Activated CD8-positive, alpha-beta T cell treated with anti-CD3 and anti-CD28 coated beads for 36 hours (primary cell): ENCODE measurements at regions of chr6 and their contacts with region 1.

Region 1: GRCh38 chr6:36759148-36759759 is 61.6 kb downstream of the RAB44 start:
- DNase-seq: peak; percentile 82
- ATAC-seq: peak; percentile 45
- H3K4me3 Mint-ChIP-seq: no peak overlapping the region
- H3K27ac Mint-ChIP-seq: no peak overlapping the region
- H3K4me1 Mint-ChIP-seq: peaks cover 38% of the 10 kb centered on the region
- H3K27me3 Mint-ChIP-seq: no peaks in the 10 kb centered on the region
- CTCF ChIP-seq: peak; percentile 92

Region 2: DNA sequence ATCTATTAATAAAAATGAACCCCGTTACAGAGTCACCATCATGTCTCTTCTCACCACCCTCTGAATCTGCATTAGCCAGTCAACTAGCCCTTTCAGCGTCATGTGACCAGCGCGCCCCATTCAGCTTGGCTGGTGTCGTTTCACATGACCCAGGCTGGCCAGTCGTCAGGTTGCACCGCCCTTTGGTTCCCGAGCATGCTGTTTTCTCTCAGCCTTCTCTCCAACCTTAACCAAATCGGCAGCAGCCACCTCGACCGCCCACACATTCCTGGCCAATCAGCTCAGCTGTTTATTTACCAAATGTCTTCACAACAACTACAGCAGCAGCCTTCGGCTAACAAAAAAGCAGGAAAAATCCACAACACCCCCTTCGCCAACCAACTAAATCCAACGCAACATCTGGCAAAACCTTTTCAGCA is 159.5 kb before region 1 on chr6:
- CTCF ChIA-PET with region 1: interaction called, 16 read pairs
- POLR2A ChIA-PET with region 1: interaction called, 3 read pairs
- intact Hi-C with region 1: no loop called
- DNase-seq: peak; percentile 91
- ATAC-seq: peak; percentile 88
- H3K4me3 Mint-ChIP-seq: peak overlapping the region; percentile 86
- H3K27ac Mint-ChIP-seq: peak overlapping the region; percentile 85
- H3K4me1 Mint-ChIP-seq: peaks cover 61% of the 10 kb centered on the region
- H3K27me3 Mint-ChIP-seq: no peaks in the 10 kb centered on the region
- CTCF ChIP-seq: no peak

Region 3: DNA sequence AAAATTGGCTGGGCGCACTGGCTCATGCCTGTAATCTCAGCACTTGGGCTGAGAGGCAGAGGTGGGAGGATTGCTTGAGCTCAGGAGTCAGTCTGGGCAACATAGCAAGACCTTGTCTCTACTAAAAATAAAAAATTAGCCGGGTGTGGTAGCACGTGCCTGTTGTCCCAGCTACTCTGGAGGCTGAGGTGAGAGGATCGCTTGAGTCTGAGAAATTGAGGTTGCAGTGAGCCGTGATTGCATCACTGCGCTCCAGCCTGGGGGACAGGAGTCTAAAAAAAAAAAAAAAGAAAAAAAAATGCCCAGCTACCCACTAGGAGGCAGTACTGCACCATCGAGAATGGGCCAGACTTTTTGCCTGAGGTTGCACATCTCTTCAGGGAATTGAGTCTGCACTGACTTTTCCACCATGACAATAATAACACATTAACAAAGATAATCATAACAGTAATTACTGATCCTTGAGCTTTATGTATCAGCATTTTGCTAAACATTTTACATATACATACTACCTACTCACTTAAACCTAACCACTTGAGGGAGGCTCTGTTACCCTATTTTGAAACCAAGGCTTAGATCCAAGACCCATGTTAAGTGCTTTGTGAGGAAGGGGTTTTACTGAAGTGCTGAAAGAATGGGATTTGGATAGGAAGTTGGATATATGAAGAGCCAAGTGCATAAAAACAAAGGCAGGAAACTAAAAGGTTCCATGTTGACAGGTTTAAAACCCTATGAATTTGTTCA is 144.1 kb before region 1 on chr6:
- CTCF ChIA-PET with region 1: interaction called, 56 read pairs
- POLR2A ChIA-PET with region 1: interaction called, 14 read pairs
- intact Hi-C with region 1: loop called (anchors 1 kb)
- DNase-seq: peak; percentile 57
- ATAC-seq: peak; percentile 71
- H3K4me3 Mint-ChIP-seq: no peak overlapping the region
- H3K27ac Mint-ChIP-seq: peak overlapping the region; percentile 59
- H3K4me1 Mint-ChIP-seq: peaks cover 13% of the 10 kb centered on the region
- H3K27me3 Mint-ChIP-seq: no peaks in the 10 kb centered on the region
- CTCF ChIP-seq: peak; percentile 85

Region 4: DNA sequence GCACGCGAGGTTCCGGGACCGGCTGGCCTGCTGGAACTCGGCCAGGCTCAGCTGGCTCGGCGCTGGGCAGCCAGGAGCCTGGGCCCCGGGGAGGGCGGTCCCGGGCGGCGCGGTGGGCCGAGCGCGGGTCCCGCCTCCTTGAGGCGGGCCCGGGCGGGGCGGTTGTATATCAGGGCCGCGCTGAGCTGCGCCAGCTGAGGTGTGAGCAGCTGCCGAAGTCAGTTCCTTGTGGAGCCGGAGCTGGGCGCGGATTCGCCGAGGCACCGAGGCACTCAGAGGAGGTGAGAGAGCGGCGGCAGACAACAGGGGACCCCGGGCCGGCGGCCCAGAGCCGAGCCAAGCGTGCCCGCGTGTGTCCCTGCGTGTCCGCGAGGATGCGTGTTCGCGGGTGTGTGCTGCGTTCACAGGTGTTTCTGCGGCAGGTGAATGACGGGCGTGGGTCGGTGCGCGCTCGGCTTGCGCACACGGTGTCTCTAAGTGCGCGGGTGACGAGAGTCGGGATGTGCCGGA is 80.7 kb before region 1 on chr6 and contains the start of gene CDKN1A:
- CTCF ChIA-PET with region 1: interaction called, 36 read pairs
- POLR2A ChIA-PET with region 1: interaction called, 5 read pairs
- intact Hi-C with region 1: loop called (anchors 5 kb)
- DNase-seq: peak; percentile 84
- ATAC-seq: peak; percentile 62
- H3K4me3 Mint-ChIP-seq: peak within 1 kb of the TSS; percentile 91
- H3K27ac Mint-ChIP-seq: peak within 1 kb of the TSS; percentile 72
- H3K4me1 Mint-ChIP-seq: peaks cover 50% of the 10 kb centered on the region
- H3K27me3 Mint-ChIP-seq: peaks cover 4% of the 10 kb centered on the region
- CTCF ChIP-seq: no peak
- total RNA-seq, gene CDKN1A: 42.3 to 47.4 TPM

Region 5: DNA sequence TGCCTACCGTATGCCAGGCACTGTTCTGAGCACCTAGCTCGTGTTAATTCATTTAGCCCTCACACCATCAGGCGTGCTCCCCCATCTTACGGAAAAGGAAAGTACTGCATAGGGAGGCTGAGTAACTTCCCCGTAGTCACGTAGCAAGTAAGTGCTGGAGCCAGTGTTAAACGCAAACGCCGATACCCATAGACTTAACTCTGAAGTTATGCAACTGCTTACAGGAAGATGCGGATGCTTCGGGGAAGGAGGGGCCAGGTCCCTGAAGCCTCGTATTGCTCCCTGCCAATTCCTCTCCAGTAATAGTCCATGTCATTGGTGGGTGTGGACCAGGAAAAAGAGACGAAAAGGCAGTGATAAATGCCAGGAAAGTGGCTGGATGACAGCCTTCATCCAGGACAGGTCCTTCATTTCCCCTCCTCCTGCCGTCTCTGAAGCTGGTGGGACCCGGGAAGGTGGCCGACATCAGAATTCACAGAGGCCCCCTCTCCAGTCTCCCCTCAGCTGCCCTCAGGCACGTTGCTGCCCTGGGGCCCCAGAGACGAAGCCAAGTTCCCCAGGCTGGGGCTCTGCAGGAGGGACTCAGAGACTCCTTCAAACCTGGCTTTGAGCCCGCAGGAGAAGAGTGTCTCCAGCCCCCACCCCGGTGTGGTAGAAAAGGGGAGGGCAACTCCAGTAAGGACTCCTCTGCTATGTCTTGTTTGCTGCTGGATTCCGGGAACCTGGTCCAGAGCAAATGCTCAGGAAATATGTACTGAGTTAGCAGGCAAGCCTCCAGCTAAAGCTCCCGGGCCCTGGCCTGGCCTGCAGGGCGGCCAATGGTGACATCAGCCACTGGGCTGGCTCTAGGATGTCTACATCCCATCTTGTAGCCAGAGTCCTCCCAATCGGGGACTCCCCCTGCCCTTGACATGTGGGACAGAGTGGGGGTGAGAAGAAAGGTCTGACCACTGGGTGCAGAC is 23.9 kb before region 1 on chr6:
- CTCF ChIA-PET with region 1: interaction called, 10 read pairs
- POLR2A ChIA-PET with region 1: no interaction called
- intact Hi-C with region 1: no loop called
- DNase-seq: peak; percentile 63
- ATAC-seq: peak; percentile 94
- H3K4me3 Mint-ChIP-seq: peak overlapping the region; percentile 55
- H3K27ac Mint-ChIP-seq: peak overlapping the region; percentile 84
- H3K4me1 Mint-ChIP-seq: peaks cover 11% of the 10 kb centered on the region
- H3K27me3 Mint-ChIP-seq: peaks cover 3% of the 10 kb centered on the region
- CTCF ChIP-seq: no peak

Region 6: GRCh38 chr6:36874443-36875249 is 115.4 kb after region 1 on chr6 and contains the start of gene PPIL1:
- CTCF ChIA-PET with region 1: interaction called, 13 read pairs
- POLR2A ChIA-PET with region 1: no interaction called
- intact Hi-C with region 1: no loop called
- DNase-seq: peak; percentile 88
- ATAC-seq: peak; percentile 91
- H3K4me3 Mint-ChIP-seq: peak within 1 kb of the TSS; percentile 99
- H3K27ac Mint-ChIP-seq: peak within 1 kb of the TSS; percentile 100
- H3K4me1 Mint-ChIP-seq: peaks cover 42% of the 10 kb centered on the region
- H3K27me3 Mint-ChIP-seq: peaks cover 5% of the 10 kb centered on the region
- CTCF ChIP-seq: no peak
- total RNA-seq, gene PPIL1: 34.5 to 35.6 TPM

Region 7: DNA sequence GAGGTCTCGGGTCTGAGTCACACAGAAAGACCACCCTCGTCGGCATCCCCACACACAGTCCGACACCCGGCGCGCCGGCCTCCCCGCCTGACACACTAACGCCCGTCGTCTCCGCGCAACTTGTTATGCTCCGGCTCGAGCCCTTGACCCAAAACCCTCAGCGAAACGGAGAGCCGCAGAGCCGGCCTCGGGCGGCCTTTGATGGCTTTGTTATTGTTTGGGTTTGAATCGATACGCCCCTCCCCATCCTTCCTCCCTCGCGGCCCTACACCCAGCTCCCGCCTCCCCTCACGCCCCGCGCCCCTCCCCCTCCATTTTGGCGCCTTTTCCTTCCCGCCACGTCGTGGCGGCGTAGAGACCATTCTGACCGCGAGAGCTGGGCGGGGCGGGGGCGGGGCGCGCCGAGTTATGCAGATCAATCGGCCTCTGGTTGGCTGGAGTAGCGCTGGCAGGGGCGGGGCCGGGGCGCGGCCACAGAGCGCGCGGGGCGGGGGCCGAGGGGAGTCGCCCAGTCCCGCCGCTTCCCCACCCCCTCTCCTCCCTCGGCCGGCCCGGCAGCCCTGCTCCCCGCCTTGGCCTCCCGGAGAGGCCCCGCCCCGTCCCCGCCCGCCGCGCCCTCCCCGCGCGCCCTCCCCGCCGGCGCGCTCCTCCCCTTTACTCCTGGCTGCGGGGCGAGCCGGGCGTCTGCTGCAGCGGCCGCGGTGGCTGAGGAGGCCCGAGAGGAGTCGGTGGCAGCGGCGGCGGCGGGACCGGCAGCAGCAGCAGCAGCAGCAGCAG is 410.4 kb after region 1 on chr6 and contains the start of gene PIM1:
- CTCF ChIA-PET with region 1: no interaction called
- POLR2A ChIA-PET with region 1: no interaction called
- intact Hi-C with region 1: no loop called
- DNase-seq: peak; percentile 100
- ATAC-seq: peak; percentile 80
- H3K4me3 Mint-ChIP-seq: peak within 1 kb of the TSS; percentile 93
- H3K27ac Mint-ChIP-seq: peak within 1 kb of the TSS; percentile 98
- H3K4me1 Mint-ChIP-seq: peaks cover 37% of the 10 kb centered on the region
- H3K27me3 Mint-ChIP-seq: no peaks in the 10 kb centered on the region
- CTCF ChIP-seq: no peak
- total RNA-seq, gene PIM1: 293 to 305 TPM